Activated CD8-positive, alpha-beta T cell treated with anti-CD3 and anti-CD28 coated beads for 36 hours (primary cell): ENCODE measurements at regions of chr22 and their contacts with region 1.

Region 1: GRCh38 chr22:39997939-39998338 is 3.2 kb downstream of the FAM83F start:
- DNase-seq: no peak
- ATAC-seq: no peak
- H3K4me3 Mint-ChIP-seq: no peak overlapping the region
- H3K27ac Mint-ChIP-seq: no peak overlapping the region
- H3K4me1 Mint-ChIP-seq: peaks cover 16% of the 10 kb centered on the region
- H3K27me3 Mint-ChIP-seq: peaks cover 7% of the 10 kb centered on the region
- CTCF ChIP-seq: no peak

Region 2: DNA sequence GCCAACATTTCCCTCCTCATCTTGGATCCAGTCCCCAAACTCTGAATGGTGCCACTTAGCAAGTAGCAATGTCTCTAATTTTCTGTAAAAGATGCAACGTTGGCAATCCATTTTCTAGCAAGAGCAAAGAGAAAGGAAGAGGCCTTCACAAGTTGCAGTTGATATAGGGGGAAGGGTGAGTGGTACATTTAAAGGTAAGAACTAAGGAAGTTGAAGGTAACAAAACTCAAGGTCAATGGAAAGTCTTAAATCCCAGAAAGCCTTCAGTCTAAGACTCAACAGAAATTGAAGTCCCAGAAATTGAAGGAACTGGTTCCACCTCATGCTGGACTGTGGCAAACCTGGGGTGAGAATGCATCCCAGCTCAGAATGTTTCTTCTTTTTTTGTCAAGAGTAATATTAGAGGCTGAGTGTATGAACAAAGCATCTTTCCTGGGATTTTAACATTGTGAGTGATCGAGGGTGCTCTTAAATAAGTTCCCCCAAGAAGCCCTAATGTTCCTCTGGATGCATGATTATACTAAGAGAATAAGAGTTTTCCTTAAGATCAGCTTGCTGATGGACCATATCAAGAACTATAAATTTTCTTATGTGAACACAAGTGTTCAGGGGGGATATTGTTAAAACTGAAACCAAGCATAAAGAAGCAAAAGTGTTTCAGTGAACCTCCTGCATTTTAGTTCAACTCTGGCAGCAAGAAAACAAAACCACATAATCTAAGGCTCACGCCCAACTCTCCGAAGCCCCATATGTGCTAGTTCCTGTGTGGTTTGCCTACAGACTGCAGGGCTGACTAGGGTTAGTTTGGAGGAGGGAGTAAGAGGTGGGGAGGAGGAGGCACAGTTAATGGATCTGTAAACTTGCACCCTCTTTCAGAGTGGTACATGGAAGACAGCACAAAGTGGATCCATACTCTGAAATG is 97.4 kb before region 1 on chr22 and contains the start of gene GRAP2:
- CTCF ChIA-PET with region 1: no interaction called
- POLR2A ChIA-PET with region 1: no interaction called
- intact Hi-C with region 1: no loop called
- DNase-seq: peak; percentile 83
- ATAC-seq: peak; percentile 89
- H3K4me3 Mint-ChIP-seq: peak within 1 kb of the TSS; percentile 80
- H3K27ac Mint-ChIP-seq: peak within 1 kb of the TSS; percentile 99
- H3K4me1 Mint-ChIP-seq: peaks cover 14% of the 10 kb centered on the region
- H3K27me3 Mint-ChIP-seq: no peaks in the 10 kb centered on the region
- CTCF ChIP-seq: no peak
- total RNA-seq, gene GRAP2: 83.2 to 86.8 TPM

Region 3: GRCh38 chr22:39984006-39984405 is 13.9 kb before region 1 on chr22:
- CTCF ChIA-PET with region 1: interaction called, 5 read pairs
- POLR2A ChIA-PET with region 1: interaction called, 16 read pairs
- intact Hi-C with region 1: no loop called
- DNase-seq: no peak
- ATAC-seq: no peak
- H3K4me3 Mint-ChIP-seq: no peak overlapping the region
- H3K27ac Mint-ChIP-seq: no peak overlapping the region
- H3K4me1 Mint-ChIP-seq: peaks cover 38% of the 10 kb centered on the region
- H3K27me3 Mint-ChIP-seq: peaks cover 4% of the 10 kb centered on the region
- CTCF ChIP-seq: no peak

Region 4: GRCh38 chr22:40009292-40009769 is 11.4 kb after region 1 on chr22:
- CTCF ChIA-PET with region 1: interaction called, 11 read pairs
- POLR2A ChIA-PET with region 1: interaction called, 7 read pairs
- intact Hi-C with region 1: no loop called
- DNase-seq: no peak
- ATAC-seq: peak; percentile 26
- H3K4me3 Mint-ChIP-seq: peak overlapping the region; percentile 39
- H3K27ac Mint-ChIP-seq: peak overlapping the region; percentile 85
- H3K4me1 Mint-ChIP-seq: peaks cover 20% of the 10 kb centered on the region
- H3K27me3 Mint-ChIP-seq: peaks cover 4% of the 10 kb centered on the region
- CTCF ChIP-seq: no peak

Region 5: GRCh38 chr22:40044102-40044869 is 46.3 kb after region 1 on chr22:
- CTCF ChIA-PET with region 1: no interaction called
- POLR2A ChIA-PET with region 1: interaction called, 11 read pairs
- intact Hi-C with region 1: no loop called
- DNase-seq: peak; percentile 99
- ATAC-seq: peak; percentile 88
- H3K4me3 Mint-ChIP-seq: peak overlapping the region; percentile 87
- H3K27ac Mint-ChIP-seq: peak overlapping the region; percentile 99
- H3K4me1 Mint-ChIP-seq: peaks cover 26% of the 10 kb centered on the region
- H3K27me3 Mint-ChIP-seq: no peaks in the 10 kb centered on the region
- CTCF ChIP-seq: no peak

Region 6: DNA sequence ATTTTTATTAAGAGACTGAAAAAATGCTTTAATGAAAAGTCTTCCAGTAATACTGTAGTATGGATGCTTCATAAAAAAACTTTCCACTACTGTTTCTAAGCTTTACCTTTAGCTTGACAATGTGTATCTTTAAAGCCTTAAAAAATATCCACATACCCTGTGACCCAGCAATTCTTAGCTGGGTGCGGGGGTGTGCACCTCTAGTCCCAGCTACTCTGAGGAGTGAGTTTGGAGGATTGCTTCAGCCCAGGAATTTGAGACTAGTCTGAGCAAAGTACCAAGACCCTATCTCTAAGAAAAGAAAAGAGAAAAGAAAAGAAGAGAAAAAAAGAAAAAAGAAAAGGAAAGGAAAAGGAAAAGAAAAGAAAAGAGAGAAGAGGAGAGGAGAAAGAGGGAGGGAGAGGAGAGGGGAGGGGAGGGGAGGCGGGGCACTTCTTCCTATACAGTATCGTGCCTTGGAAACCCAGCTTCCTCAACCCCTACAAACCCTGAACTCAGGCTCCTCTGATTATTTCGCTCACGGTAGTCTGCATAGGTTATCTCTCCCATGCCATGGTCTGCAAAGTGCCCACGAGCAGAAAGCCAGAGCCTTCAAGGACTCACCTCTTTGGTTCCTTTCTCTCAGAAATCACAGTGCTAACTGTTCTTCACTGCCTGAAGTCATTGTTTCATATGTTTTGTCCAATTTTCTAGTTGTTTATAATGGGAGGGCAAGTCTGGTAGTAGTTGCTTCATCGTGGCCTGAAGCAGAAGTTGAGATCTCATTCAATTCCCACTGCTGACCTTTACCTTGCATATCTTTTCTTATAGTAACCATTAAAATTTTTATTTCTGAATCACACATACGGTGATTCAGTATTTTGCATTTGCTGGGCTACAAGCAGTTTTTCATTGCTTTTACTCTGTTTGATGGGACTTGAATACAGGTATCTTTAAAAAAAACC is 79.0 kb after region 1 on chr22:
- CTCF ChIA-PET with region 1: no interaction called
- POLR2A ChIA-PET with region 1: no interaction called
- intact Hi-C with region 1: no loop called
- DNase-seq: no peak
- ATAC-seq: peak; percentile 57
- H3K4me3 Mint-ChIP-seq: peak overlapping the region; percentile 73
- H3K27ac Mint-ChIP-seq: peak overlapping the region; percentile 88
- H3K4me1 Mint-ChIP-seq: peaks cover 51% of the 10 kb centered on the region
- H3K27me3 Mint-ChIP-seq: no peaks in the 10 kb centered on the region
- CTCF ChIP-seq: no peak